Cardiac septum (tissue), 1 donor: ENCODE measurements at regions of chr6 and their contacts with region 1.

Region 1: DNA sequence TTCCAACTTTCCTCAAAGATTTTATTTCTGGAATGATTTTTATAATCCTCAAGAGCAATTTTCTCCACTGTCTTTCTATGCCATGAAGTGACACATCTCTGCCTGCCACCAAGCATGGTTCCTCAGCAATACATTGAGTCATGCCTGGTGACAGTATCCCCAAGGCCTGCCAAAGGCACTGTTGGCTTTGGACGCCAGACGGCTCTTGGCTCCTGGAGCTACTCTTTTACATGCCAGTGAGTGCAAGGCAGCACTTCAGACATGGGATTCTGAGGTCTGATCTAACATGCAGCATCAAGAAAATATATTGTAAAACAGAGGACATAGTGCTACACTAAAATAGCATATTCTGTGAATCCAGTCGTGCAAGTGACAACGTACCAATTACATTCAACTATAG is 20.1 kb upstream of the PLEKHG1 start:
- DNase-seq: no peak

Region 2: DNA sequence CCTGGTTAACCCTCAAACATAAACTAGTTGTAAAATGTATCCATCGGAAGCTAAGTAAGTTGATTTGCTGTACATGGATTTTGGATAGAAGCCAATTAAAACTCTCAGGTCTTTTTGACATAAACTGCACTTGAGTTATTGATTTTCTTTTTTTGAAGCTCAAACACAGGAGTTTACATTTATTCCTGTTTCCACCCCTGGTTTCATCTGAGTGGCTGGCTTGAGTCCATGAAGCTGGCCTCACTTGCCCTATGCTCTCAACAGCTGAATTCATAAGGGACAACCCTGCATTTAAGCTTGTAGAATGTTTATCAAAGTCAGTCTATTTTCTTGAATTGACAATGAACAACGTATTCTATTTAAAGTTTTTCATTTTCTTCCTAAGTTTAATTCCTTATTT is 38.0 kb before region 1 on chr6:
- intact Hi-C with region 1: loop called (anchors 5 kb)
- DNase-seq: no peak